ENCODE measurements at regions of chr15 and their contacts with region 1.

Region 1: GRCh38 chr15:86413191-86413590 is 333.5 kb downstream of the AGBL1 start:
- DNase-seq: no peak
- H3K4me3 Mint-ChIP-seq: no peak overlapping the region
- H3K27ac Mint-ChIP-seq: no peak overlapping the region
- H3K4me1 Mint-ChIP-seq: no peaks in the 10 kb centered on the region
- H3K27me3 Mint-ChIP-seq: peaks cover 2% of the 10 kb centered on the region

Region 2: GRCh38 chr15:86355801-86356200 is 57.4 kb before region 1 on chr15:
- CTCF ChIA-PET with region 1: no interaction called
- POLR2A ChIA-PET with region 1: no interaction called
- intact Hi-C with region 1: loop called (anchors 10 kb)
- DNase-seq: no peak
- H3K4me3 Mint-ChIP-seq: no peak overlapping the region
- H3K27ac Mint-ChIP-seq: no peak overlapping the region
- H3K4me1 Mint-ChIP-seq: no peaks in the 10 kb centered on the region
- H3K27me3 Mint-ChIP-seq: no peaks in the 10 kb centered on the region

Region 3: GRCh38 chr15:86425746-86426145 is 12.6 kb after region 1 on chr15:
- CTCF ChIA-PET with region 1: no interaction called
- POLR2A ChIA-PET with region 1: no interaction called
- intact Hi-C with region 1: no loop called
- DNase-seq: no peak
- H3K4me3 Mint-ChIP-seq: no peak overlapping the region
- H3K27ac Mint-ChIP-seq: no peak overlapping the region
- H3K4me1 Mint-ChIP-seq: no peaks in the 10 kb centered on the region
- H3K27me3 Mint-ChIP-seq: no peaks in the 10 kb centered on the region